CD4-positive, alpha-beta memory T cell (primary cell): ENCODE measurements at regions of chr2 and their contacts with region 1.

Region 1: DNA sequence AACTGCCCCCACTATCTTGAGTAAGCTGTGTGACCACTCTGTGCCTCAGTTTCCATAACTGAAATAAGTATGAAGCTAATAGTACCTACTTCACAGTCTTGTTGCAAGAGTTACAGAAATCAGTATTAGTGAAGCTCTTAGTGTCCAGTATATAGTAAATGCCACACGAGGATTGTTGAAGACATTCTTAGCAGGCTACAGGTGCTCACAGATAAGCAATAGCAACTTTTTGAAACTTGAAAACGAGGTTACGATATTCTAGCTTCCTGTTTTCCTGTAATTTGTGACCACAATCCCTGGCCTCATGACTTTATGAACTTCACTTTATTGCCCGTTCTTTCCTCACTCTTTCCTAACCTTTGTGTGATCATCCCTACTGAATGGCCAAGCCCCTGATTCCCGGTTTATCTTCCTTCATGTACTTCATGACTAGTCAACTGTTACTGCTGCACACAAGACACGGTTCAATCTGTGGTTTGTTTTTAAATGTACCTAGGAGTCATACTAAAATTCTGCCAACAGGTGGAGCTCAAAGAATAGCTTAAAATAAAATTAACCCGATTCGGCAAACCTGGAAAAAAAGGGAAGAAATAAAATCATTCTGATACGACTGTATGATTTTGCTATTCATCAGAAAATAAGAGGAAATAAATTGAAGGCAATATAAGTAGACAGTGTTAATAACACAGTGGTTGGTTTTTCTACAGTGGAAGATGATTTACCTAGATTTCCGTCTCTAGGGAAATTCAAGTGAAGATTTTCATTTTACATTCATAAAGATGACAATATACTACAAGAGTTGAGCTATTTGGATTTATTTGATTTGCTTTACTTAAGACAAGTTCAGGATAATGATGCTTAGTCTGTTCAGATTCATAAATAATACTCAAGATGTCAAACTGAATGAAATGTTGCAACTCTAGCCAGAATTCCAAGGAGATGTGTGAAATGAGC is 38.1 kb upstream of the STAT1 start:
- DNase-seq: peak in 4 of 5 donors; percentile 52 to 66 (median 62)
- H3K4me3 ChIP-seq: no peak overlapping the region
- H3K4me3 Mint-ChIP-seq: no peak overlapping the region
- H3K27ac ChIP-seq: no peak overlapping the region
- H3K27ac Mint-ChIP-seq: no peak overlapping the region
- H3K4me1 ChIP-seq: peaks cover 28% of the 10 kb centered on the region
- H3K4me1 Mint-ChIP-seq: peaks cover 15 to 23% (median 20%) of the 10 kb centered on the region in 4 donors
- H3K27me3 ChIP-seq: no peaks in the 10 kb centered on the region
- H3K27me3 Mint-ChIP-seq: no peaks in the 10 kb centered on the region

Region 2: GRCh38 chr2:190781604-190782198 is 270.4 kb before region 1 on chr2:
- CTCF ChIA-PET with region 1: interaction called, 4 read pairs
- POLR2A ChIA-PET with region 1: no interaction called
- intact Hi-C with region 1: loop called (anchors 5 kb)
- DNase-seq: peak in 4 of 5 donors; percentile 35 to 51 (median 50)
- H3K4me3 ChIP-seq: no peak overlapping the region
- H3K4me3 Mint-ChIP-seq: no peak overlapping the region
- H3K27ac ChIP-seq: no peak overlapping the region
- H3K27ac Mint-ChIP-seq: peak overlapping the region in 1 of 7 donors; percentile 65
- H3K4me1 ChIP-seq: no peaks in the 10 kb centered on the region
- H3K4me1 Mint-ChIP-seq: peaks cover 0 to 3% (median 1%) of the 10 kb centered on the region in 4 donors
- H3K27me3 ChIP-seq: no peaks in the 10 kb centered on the region
- H3K27me3 Mint-ChIP-seq: peaks cover 3 to 9% of the 10 kb centered on the region in 2 donors

Region 3: DNA sequence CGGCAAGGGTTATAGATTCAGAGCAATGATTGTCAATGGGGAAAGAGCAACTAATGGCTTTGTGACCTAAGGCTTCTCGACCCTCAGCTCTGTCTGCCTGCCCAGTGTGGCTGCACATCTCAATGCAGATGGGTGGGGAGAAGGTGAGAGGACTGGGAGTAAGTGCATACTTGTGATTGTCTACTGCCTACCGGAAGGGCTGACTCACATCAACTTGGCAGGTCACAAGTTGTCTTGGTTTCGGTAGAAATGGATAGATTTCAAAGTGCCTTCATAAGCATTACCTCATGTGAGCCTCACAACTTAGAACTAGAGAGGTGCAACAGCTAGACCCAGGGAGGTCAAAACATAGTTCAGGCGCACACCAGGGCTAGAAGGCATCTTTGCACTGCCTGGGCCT is 67.5 kb before region 1 on chr2:
- CTCF ChIA-PET with region 1: no interaction called
- POLR2A ChIA-PET with region 1: no interaction called
- intact Hi-C with region 1: no loop called
- DNase-seq: peak in 1 of 5 donors; percentile 43
- H3K4me3 ChIP-seq: no peak overlapping the region
- H3K4me3 Mint-ChIP-seq: no peak overlapping the region
- H3K27ac ChIP-seq: no peak overlapping the region
- H3K27ac Mint-ChIP-seq: peak overlapping the region; percentile 18 to 86 (median 59)
- H3K4me1 ChIP-seq: peaks cover 13% of the 10 kb centered on the region
- H3K4me1 Mint-ChIP-seq: peaks cover 17 to 43% (median 22%) of the 10 kb centered on the region in 4 donors
- H3K27me3 ChIP-seq: no peaks in the 10 kb centered on the region
- H3K27me3 Mint-ChIP-seq: no peaks in the 10 kb centered on the region

Region 4: DNA sequence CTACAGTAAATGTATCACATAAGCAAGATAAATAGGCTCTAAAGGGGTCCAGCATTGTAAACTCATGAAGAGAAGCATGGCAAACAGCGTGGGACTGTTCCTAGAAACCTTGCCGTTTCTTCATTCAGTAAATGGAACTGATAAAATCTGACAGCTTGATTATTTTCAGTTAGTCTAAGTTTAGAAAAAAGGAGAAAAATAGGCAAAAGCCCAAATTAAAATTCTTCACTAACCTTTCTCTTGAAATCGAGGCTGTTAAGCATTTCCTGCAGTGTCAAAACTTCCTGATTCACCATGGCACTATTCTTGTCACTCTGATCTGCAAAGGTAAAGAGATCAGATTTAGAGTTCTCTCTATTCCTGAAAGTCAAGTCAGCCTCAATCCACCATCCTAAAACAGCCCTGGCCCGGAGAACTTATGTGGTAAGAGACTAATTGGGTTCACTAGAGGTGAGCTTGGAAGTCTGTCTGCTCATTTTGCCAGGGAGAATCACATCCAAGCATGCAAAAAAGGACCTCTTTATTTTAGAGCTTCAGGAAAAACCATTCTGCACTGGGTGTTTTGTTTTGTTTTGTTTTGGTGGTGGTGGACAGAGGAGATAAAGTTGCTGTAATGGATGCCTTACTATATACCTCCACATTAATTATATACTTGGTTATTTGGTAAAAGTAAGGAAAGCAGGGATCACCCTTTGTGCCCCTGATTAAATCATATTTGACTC is 14.3 kb after region 1 on chr2:
- CTCF ChIA-PET with region 1: interaction called, 98 read pairs
- POLR2A ChIA-PET with region 1: interaction called, 15 read pairs
- intact Hi-C with region 1: no loop called
- DNase-seq: peak in 1 of 5 donors; percentile 11
- H3K4me3 ChIP-seq: peak overlapping the region in 1 of 2 donors; percentile 4
- H3K4me3 Mint-ChIP-seq: peak overlapping the region; percentile 28 to 86 (median 74)
- H3K27ac ChIP-seq: peak overlapping the region; percentile 56
- H3K27ac Mint-ChIP-seq: peak overlapping the region; percentile 64 to 93 (median 87)
- H3K4me1 ChIP-seq: peaks cover 96% of the 10 kb centered on the region
- H3K4me1 Mint-ChIP-seq: peaks cover 66 to 86% (median 76%) of the 10 kb centered on the region in 4 donors
- H3K27me3 ChIP-seq: no peaks in the 10 kb centered on the region
- H3K27me3 Mint-ChIP-seq: no peaks in the 10 kb centered on the region

Region 5: GRCh38 chr2:191114403-191114886 is 62.3 kb after region 1 on chr2:
- CTCF ChIA-PET with region 1: interaction called, 17 read pairs
- POLR2A ChIA-PET with region 1: interaction called, 24 read pairs
- intact Hi-C with region 1: no loop called
- DNase-seq: peak; percentile 43 to 71 (median 57)
- H3K4me3 ChIP-seq: peak overlapping the region in 1 of 2 donors; percentile 35
- H3K4me3 Mint-ChIP-seq: peak overlapping the region; percentile 53 to 78 (median 72)
- H3K27ac ChIP-seq: peak overlapping the region; percentile 55
- H3K27ac Mint-ChIP-seq: peak overlapping the region; percentile 89 to 97 (median 93)
- H3K4me1 ChIP-seq: peaks cover 50% of the 10 kb centered on the region
- H3K4me1 Mint-ChIP-seq: peaks cover 51 to 83% (median 67%) of the 10 kb centered on the region in 4 donors
- H3K27me3 ChIP-seq: no peaks in the 10 kb centered on the region
- H3K27me3 Mint-ChIP-seq: no peaks in the 10 kb centered on the region

Region 6: GRCh38 chr2:191144217-191144616 is 92.1 kb after region 1 on chr2:
- CTCF ChIA-PET with region 1: interaction called, 135 read pairs
- POLR2A ChIA-PET with region 1: interaction called, 16 read pairs
- intact Hi-C with region 1: no loop called
- DNase-seq: no peak
- H3K4me3 ChIP-seq: no peak overlapping the region
- H3K4me3 Mint-ChIP-seq: peak overlapping the region in 6 of 8 donors; percentile 1 to 68 (median 25)
- H3K27ac ChIP-seq: no peak overlapping the region
- H3K27ac Mint-ChIP-seq: peak overlapping the region; percentile 1 to 78 (median 40)
- H3K4me1 ChIP-seq: peaks cover 87% of the 10 kb centered on the region
- H3K4me1 Mint-ChIP-seq: peaks cover 51 to 82% (median 67%) of the 10 kb centered on the region in 4 donors
- H3K27me3 ChIP-seq: no peaks in the 10 kb centered on the region
- H3K27me3 Mint-ChIP-seq: no peaks in the 10 kb centered on the region

Region 7: GRCh38 chr2:191213333-191213732 is 161.2 kb after region 1 on chr2:
- CTCF ChIA-PET with region 1: no interaction called
- POLR2A ChIA-PET with region 1: no interaction called
- intact Hi-C with region 1: no loop called
- DNase-seq: no peak
- H3K4me3 ChIP-seq: no peak overlapping the region
- H3K4me3 Mint-ChIP-seq: no peak overlapping the region
- H3K27ac ChIP-seq: no peak overlapping the region
- H3K27ac Mint-ChIP-seq: no peak overlapping the region
- H3K4me1 ChIP-seq: no peaks in the 10 kb centered on the region
- H3K4me1 Mint-ChIP-seq: no peaks in the 10 kb centered on the region
- H3K27me3 ChIP-seq: no peaks in the 10 kb centered on the region
- H3K27me3 Mint-ChIP-seq: peaks cover 2 to 4% of the 10 kb centered on the region in 2 donors

Region 8: GRCh38 chr2:191302459-191303139 is 250.5 kb after region 1 on chr2:
- CTCF ChIA-PET with region 1: interaction called, 6 read pairs
- POLR2A ChIA-PET with region 1: no interaction called
- intact Hi-C with region 1: loop called (anchors 5 kb)
- DNase-seq: peak in 2 of 5 donors; percentile 3 to 4
- H3K4me3 ChIP-seq: no peak overlapping the region
- H3K4me3 Mint-ChIP-seq: no peak overlapping the region
- H3K27ac ChIP-seq: no peak overlapping the region
- H3K27ac Mint-ChIP-seq: no peak overlapping the region
- H3K4me1 ChIP-seq: no peaks in the 10 kb centered on the region
- H3K4me1 Mint-ChIP-seq: peaks cover 0 to 2% (median under 1%) of the 10 kb centered on the region in 4 donors
- H3K27me3 ChIP-seq: no peaks in the 10 kb centered on the region
- H3K27me3 Mint-ChIP-seq: peaks cover 0 to 8% of the 10 kb centered on the region in 2 donors